Left cardiac atrium (tissue), 4 donors: ENCODE measurements at regions of chr15 and their contacts with region 1.

Region 1: GRCh38 chr15:60614862-60615771 is 136.2 kb upstream of the ICE2 start:
- DNase-seq: no peak
- ATAC-seq: peak in 1 of 2 donors; percentile 62

Region 2: DNA sequence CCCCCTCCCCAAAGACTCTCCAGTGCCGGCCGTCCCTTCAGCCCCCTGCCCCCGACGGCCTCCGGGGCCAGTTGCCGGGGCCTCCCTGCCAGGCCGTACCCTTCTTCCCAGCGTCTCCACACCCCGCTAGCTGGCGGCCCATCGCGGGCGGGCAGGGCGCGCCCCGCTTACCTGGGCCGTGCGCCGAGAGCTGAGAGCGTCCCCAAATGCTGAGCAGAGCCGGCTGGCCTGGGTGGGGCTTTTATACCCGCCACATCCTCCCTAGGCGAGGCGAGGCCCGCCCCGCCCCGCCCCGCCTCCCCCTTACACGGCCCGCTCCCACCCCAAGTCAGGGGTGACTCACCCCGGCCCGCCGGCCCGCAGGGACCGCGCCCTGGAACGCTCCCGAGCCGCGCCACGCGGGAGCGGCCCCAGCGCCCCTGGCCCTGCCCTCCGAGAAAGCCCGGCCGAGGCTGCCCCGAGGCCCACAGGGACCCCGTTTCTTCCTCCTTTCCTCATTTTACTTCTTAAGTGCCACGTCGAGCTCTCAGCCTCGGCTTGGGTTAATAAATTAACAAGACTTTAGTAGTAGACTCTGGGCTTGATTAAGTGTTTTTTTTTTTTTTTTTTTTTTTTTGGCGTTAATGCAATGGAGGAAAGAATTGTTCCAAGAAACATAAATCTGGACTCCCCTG is 217.2 kb before region 1 on chr15 and contains the start of gene ANXA2:
- intact Hi-C with region 1: no loop called
- DNase-seq: peak; percentile 90
- ATAC-seq: peak; percentile 82 to 90
- total RNA-seq, gene ANXA2: 337 to 435 TPM

Region 3: DNA sequence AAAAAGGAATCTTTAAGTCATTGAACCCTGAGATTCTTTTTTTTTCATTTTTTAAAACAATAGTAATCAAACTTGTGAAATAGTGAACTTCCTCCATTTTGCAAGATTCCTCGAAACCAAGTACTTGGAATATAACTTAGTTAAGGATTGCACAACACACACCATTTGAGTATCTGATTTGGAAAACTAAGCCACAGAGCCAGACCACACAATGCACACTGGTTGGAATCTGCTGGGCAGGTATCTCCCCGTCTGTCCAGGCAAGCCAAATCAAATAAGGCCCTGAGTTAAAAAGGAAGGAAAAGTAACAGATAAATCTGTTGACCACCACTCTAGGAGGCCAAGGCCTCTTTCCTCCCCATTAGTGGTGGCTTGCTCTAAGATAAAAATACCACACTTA is 41.4 kb after region 1 on chr15:
- intact Hi-C with region 1: loop called in 1 of 2 experiments (anchors 5 kb)
- DNase-seq: peak; percentile 24
- ATAC-seq: peak; percentile 46 to 54